ENCODE measurements at regions of chr12 and their contacts with region 1.

Region 1: GRCh38 chr12:123365025-123365917 is 624 bp upstream of the SBNO1 start:
- DNase-seq: peak; percentile 97
- H3K4me3 ChIP-seq: peak overlapping the region; percentile 73 to 83
- H3K27ac ChIP-seq: peak overlapping the region; percentile 94 to 98
- H3K4me1 ChIP-seq: no peaks in the 10 kb centered on the region; a peak in 2 of 4 replicates
- H3K27me3 ChIP-seq: no peaks in the 10 kb centered on the region
- CTCF ChIP-seq: peak; percentile 84
- EP300 ChIP-seq: no peak
- RAD21 ChIP-seq: peak; percentile 67

Region 2: GRCh38 chr12:123337070-123337469 is 28.2 kb before region 1 on chr12:
- CTCF ChIA-PET with region 1: interaction called, 12 read pairs
- POLR2A ChIA-PET with region 1: interaction called, 4 read pairs
- DNase-seq: no peak
- H3K4me3 ChIP-seq: no peak overlapping the region
- H3K27ac ChIP-seq: no peak overlapping the region
- H3K4me1 ChIP-seq: no peaks in the 10 kb centered on the region
- H3K27me3 ChIP-seq: no peaks in the 10 kb centered on the region
- CTCF ChIP-seq: no peak
- EP300 ChIP-seq: no peak
- RAD21 ChIP-seq: no peak

Region 3: GRCh38 chr12:123384318-123384993 is 19.2 kb after region 1 on chr12:
- CTCF ChIA-PET with region 1: interaction called, 13 read pairs
- POLR2A ChIA-PET with region 1: interaction called, 22 read pairs
- DNase-seq: peak; percentile 44
- H3K4me3 ChIP-seq: peak overlapping the region; percentile 68 to 88
- H3K27ac ChIP-seq: peak overlapping the region; percentile 44 to 59
- H3K4me1 ChIP-seq: peaks cover 0 to 10% of the 10 kb centered on the region in 2 experiments; a peak in 3 of 4 replicates
- H3K27me3 ChIP-seq: no peaks in the 10 kb centered on the region
- CTCF ChIP-seq: peak; percentile 26
- EP300 ChIP-seq: no peak
- RAD21 ChIP-seq: no peak

Region 4: GRCh38 chr12:123398550-123399254 is 33.4 kb after region 1 on chr12:
- CTCF ChIA-PET with region 1: no interaction called
- POLR2A ChIA-PET with region 1: no interaction called
- DNase-seq: no peak
- H3K4me3 ChIP-seq: no peak overlapping the region
- H3K27ac ChIP-seq: no peak overlapping the region
- H3K4me1 ChIP-seq: no peaks in the 10 kb centered on the region
- H3K27me3 ChIP-seq: no peaks in the 10 kb centered on the region
- CTCF ChIP-seq: no peak
- EP300 ChIP-seq: no peak
- RAD21 ChIP-seq: no peak

Region 5: DNA sequence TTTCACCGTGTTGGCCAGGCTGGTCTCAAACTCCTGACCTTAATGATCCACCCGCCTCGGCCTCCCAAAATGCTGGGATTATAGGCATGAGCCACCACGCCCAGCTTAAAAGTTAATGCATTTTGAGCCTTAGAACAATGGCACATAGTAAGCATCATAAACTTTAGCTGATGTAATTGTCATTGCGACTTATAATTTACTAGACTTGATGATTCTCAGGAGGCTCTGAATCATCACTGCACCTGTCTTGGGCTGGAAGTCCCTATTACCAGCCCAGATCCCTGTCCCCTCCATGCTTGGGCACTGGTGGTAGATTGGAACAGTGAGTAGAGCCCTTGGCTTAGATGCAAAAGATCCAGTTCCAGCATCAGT is 44.8 kb after region 1 on chr12:
- CTCF ChIA-PET with region 1: no interaction called
- POLR2A ChIA-PET with region 1: no interaction called
- DNase-seq: no peak
- H3K4me3 ChIP-seq: no peak overlapping the region
- H3K27ac ChIP-seq: no peak overlapping the region
- H3K4me1 ChIP-seq: no peaks in the 10 kb centered on the region
- H3K27me3 ChIP-seq: no peaks in the 10 kb centered on the region
- CTCF ChIP-seq: no peak
- EP300 ChIP-seq: no peak
- RAD21 ChIP-seq: no peak